PC-9 (cell line): ENCODE measurements at regions of chr16 and their contacts with region 1.

Region 1: GRCh38 chr16:22397464-22397863 is 23.0 kb upstream of the CDR2 start:
- DNase-seq: peak; percentile 84 to 96
- H3K4me3 ChIP-seq: no peak overlapping the region
- H3K27ac ChIP-seq: peak overlapping the region; percentile 55
- H3K4me1 ChIP-seq: peaks cover 51% of the 10 kb centered on the region
- H3K27me3 ChIP-seq: no peaks in the 10 kb centered on the region
- CTCF ChIP-seq: no peak; the same call in 1 of the 2 replicates

Region 2: GRCh38 chr16:22297114-22297878 is 100.2 kb before region 1 on chr16 and contains the start of gene POLR3E:
- CTCF ChIA-PET with region 1: no interaction called
- POLR2A ChIA-PET with region 1: no interaction called
- intact Hi-C with region 1: no loop called
- DNase-seq: peak; percentile 89 to 100
- H3K4me3 ChIP-seq: peak within 1 kb of the TSS; percentile 78
- H3K27ac ChIP-seq: peak within 1 kb of the TSS; percentile 84
- H3K4me1 ChIP-seq: no peaks in the 10 kb centered on the region
- H3K27me3 ChIP-seq: no peaks in the 10 kb centered on the region
- CTCF ChIP-seq: peak; percentile 86
- total RNA-seq, gene POLR3E: 65.2 and 70.9 TPM in 2 replicates

Region 3: DNA sequence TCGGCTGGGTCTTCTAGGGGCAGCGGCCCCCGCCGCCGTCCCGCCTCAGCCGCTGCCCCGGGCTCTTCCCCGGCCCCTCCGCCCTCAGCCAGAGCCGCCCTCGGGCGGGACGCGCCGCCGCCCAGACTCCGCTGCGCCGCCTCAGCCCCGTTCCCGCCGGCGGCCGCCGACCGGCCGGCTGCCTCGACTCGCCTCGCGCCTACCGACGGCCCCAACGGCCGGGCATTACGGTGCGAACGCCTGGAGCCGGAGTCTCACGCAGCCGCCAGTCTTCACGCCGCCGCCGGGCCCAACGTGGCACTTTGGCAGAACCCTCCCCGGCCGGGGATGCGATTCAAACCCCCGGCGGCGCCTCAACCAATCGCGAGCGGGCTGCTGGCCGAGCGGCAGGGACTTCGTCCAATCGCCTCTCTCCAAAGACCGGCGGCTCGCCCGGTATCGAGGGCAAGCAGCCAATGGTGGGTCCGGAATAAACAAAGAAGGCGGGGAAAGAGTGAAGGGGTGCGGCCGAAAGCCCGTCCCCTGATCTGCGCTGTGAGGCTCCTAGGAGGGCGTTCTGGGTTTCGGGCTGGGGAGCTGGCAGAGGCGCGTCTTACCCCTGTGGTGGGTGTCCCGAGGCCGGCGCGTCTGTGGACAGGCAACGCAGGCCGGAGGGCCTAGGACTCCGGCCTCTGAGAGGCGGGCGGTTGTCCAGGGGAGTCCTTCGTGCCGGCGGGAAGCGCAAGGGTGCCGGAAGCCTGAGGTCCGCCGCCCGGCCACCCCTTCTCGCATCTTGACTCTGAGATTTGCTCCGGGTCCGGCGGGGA is 22.9 kb before region 1 on chr16 and contains the start of gene CDR2:
- CTCF ChIA-PET with region 1: interaction called, 7 read pairs
- POLR2A ChIA-PET with region 1: interaction called, 4 read pairs
- intact Hi-C with region 1: loop called (anchors 1 kb)
- DNase-seq: peak; percentile 91 to 99
- H3K4me3 ChIP-seq: peak within 1 kb of the TSS; percentile 95
- H3K27ac ChIP-seq: peak within 1 kb of the TSS; percentile 45; the same call in 1 of the 2 replicates
- H3K4me1 ChIP-seq: peaks cover 39% of the 10 kb centered on the region
- H3K27me3 ChIP-seq: no peaks in the 10 kb centered on the region
- CTCF ChIP-seq: no peak
- total RNA-seq, gene CDR2: 29.3 and 34.0 TPM in 2 replicates

Region 4: GRCh38 chr16:22386976-22387375 is 10.5 kb before region 1 on chr16:
- CTCF ChIA-PET with region 1: no interaction called
- POLR2A ChIA-PET with region 1: interaction called, 12 read pairs
- intact Hi-C with region 1: loop called (anchors 1 kb)
- DNase-seq: peak; percentile 25 to 92
- H3K4me3 ChIP-seq: no peak overlapping the region
- H3K27ac ChIP-seq: peak overlapping the region; percentile 64
- H3K4me1 ChIP-seq: peaks cover 41% of the 10 kb centered on the region
- H3K27me3 ChIP-seq: no peaks in the 10 kb centered on the region
- CTCF ChIP-seq: no peak

Region 5: GRCh38 chr16:22857296-22858025 is 460.0 kb after region 1 on chr16:
- CTCF ChIA-PET with region 1: no interaction called
- POLR2A ChIA-PET with region 1: no interaction called
- intact Hi-C with region 1: no loop called
- DNase-seq: no peak
- H3K4me3 ChIP-seq: no peak overlapping the region
- H3K27ac ChIP-seq: no peak overlapping the region
- H3K4me1 ChIP-seq: no peaks in the 10 kb centered on the region
- H3K27me3 ChIP-seq: peaks cover 16% of the 10 kb centered on the region; the same call in 1 of the 2 replicates
- CTCF ChIP-seq: no peak